ENCODE measurements at regions of chr1 and their contacts with region 1.

Region 1: GRCh38 chr1:61049850-61050540 is 32.4 kb upstream of the NFIA start:
- DNase-seq: peak; percentile 94 to 96
- H3K4me3 ChIP-seq: peak overlapping the region; percentile 65 to 81
- H3K27ac ChIP-seq: peak overlapping the region; percentile 92 to 94
- H3K4me1 ChIP-seq: peaks cover 0 to 4% of the 10 kb centered on the region in 2 donors
- H3K27me3 ChIP-seq: no peaks in the 10 kb centered on the region
- CTCF ChIP-seq: peak; percentile 92 to 98 (median 96)
- POLR2A ChIP-seq: peak in 1 of 2 donors; percentile 60

Region 2: GRCh38 chr1:61270761-61271411 is 220.9 kb after region 1 on chr1:
- intact Hi-C with region 1: no loop called
- DNase-seq: no peak
- H3K4me3 ChIP-seq: no peak overlapping the region
- H3K27ac ChIP-seq: no peak overlapping the region
- H3K4me1 ChIP-seq: no peaks in the 10 kb centered on the region
- H3K27me3 ChIP-seq: no peaks in the 10 kb centered on the region
- CTCF ChIP-seq: no peak
- POLR2A ChIP-seq: no peak

Region 3: GRCh38 chr1:61453111-61453961 is 403.3 kb after region 1 on chr1:
- intact Hi-C with region 1: loop called (anchors 10 kb)
- DNase-seq: peak; percentile 94 to 95
- H3K4me3 ChIP-seq: no peak overlapping the region
- H3K27ac ChIP-seq: peak overlapping the region; percentile 74 to 76
- H3K4me1 ChIP-seq: peaks cover 5 to 12% of the 10 kb centered on the region in 2 donors
- H3K27me3 ChIP-seq: no peaks in the 10 kb centered on the region
- CTCF ChIP-seq: peak; percentile 77 to 86 (median 78)
- POLR2A ChIP-seq: no peak

Region 4: GRCh38 chr1:61641578-61642336 is 591.8 kb after region 1 on chr1:
- intact Hi-C with region 1: loop called (anchors 10 kb)
- DNase-seq: peak; percentile 78 to 82
- H3K4me3 ChIP-seq: peak overlapping the region in 1 of 2 donors; percentile 29
- H3K27ac ChIP-seq: peak overlapping the region; percentile 75 to 81
- H3K4me1 ChIP-seq: peaks cover 6 to 20% of the 10 kb centered on the region in 2 donors
- H3K27me3 ChIP-seq: no peaks in the 10 kb centered on the region
- CTCF ChIP-seq: peak; percentile 64 to 90 (median 76)
- POLR2A ChIP-seq: no peak

Region 5: DNA sequence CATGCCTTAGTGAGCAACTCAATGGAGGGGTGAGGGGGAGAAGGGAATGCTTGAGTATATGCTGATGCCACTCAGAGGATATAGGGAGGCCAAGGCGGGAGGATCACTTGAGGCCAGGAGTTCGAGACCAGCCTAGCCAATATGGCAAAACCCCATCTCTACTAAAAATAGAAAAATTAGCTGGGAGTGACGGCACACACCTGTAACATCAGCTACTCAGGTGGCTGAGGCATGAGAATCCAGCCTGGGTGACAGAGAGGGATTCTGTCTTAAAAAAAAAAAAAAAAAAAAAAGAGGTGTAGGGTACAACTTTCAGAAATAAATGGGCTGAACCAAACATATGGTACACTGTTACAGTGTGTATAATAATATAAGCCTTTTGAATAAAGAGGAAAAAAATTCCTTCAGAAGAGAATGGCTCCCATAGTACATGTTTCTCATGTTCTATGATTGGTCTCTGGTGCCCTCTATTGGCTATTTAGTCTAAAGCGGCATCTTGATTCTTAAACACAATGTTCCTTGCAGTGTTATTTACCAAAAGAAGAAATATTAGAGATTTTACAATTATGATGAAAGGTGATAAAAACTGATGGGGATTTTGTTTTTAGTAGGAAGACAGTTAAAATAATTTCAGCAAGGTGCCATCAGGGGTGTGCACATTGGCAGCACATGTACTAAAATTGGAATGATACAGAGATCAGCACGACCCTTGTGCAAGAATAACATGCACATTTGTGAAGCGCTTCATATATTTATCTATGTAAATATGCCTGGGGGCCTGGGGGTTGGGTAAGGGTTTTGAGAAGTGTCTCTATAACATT is 802.1 kb after region 1 on chr1:
- intact Hi-C with region 1: loop called (anchors 10 kb)
- DNase-seq: no peak
- H3K4me3 ChIP-seq: no peak overlapping the region
- H3K27ac ChIP-seq: no peak overlapping the region
- H3K4me1 ChIP-seq: no peaks in the 10 kb centered on the region
- H3K27me3 ChIP-seq: no peaks in the 10 kb centered on the region
- CTCF ChIP-seq: peak; percentile 66 to 73 (median 70)
- POLR2A ChIP-seq: no peak

Measured in uterus (tissue), 4 donors.